ENCODE measurements at regions of chr13 and their contacts with region 1.

Region 1: DNA sequence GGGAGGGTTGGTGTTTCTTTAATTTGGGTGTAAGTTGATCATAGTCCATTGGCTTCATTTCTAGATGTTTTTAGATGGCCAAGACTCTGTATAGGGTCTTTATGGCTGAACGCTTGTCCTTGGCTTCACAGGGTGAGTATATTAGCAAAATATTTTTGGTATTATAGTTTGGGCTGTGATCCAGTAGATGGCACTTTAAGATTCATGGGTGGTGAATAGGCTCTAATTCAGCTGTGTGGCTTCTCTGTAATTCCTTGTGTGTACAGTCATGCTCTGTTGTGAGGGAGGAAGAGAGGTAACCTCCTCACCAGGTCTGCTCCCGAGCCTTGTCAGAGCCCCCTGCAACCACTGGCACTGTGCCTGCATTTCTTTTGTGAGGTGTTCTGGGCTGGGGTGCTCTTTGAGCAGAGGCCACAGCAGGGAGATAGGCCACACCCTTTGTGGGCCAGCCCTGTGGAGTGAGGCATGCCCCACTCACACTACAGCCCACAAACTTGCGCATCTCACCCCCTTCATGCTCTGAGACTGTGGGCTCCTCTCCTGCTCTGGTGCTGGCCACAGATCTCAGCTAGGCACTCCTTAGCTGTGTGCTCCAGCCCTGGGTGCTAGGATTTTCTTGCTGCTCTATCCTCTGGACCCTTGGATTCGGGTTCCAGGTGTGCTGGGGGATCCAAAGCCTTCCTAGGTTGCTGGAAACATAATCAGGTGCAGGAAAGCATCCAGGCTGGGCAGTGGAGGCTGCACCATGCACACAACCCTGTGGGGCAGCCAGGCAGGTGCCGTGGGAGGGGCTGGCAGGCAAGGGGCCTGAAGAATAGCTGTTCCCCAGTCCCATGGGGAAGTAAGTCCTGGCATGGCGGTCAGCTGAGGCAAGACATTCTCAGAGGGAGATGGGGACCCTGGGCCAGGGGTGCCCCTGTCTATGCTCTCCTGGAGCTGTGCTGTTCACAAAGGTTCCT is 193.9 kb downstream of the GPC5 start:
- DNase-seq: no peak
- H3K4me3 ChIP-seq: no peak overlapping the region
- H3K27ac ChIP-seq: no peak overlapping the region
- H3K4me1 ChIP-seq: no peaks in the 10 kb centered on the region
- H3K27me3 ChIP-seq: no peaks in the 10 kb centered on the region
- CTCF ChIP-seq: no peak
- POLR2A ChIP-seq: no peak

Region 2: DNA sequence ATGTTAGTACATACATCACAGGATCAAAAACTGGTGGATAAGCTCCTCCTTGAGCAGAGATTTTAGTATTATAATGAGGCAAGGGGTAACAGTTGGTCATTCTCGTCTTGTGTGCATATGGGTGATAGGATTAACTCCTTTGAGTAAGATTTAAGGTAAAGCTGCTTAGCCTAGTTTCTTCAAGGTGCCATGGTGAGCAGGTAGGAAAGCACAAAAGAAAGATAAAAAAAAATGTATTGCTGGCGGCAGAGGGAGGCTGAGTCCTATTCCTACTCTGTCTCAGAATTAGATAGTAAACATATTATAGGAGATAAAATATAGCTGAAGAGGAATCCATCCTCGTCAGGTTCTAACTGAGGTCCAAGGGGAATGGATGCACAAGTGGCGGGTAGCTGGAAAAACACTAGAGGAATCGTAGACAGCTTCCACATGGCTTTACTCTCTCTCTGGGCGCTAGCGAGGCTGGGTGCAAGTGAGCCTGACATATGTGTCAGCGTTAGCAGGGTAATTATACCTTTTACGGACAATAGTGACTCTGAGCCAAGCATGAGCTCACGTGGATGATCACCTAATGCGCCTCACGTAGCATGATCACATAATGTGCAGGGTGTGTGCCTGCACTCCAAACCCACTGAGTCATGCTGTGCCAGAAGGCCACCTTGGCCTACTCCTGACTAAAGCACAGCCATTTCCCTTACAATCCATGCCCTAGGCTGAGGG is 979.1 kb before region 1 on chr13:
- intact Hi-C with region 1: no loop called
- DNase-seq: no peak
- H3K4me3 ChIP-seq: no peak overlapping the region
- H3K27ac ChIP-seq: no peak overlapping the region
- H3K4me1 ChIP-seq: no peaks in the 10 kb centered on the region
- H3K27me3 ChIP-seq: no peaks in the 10 kb centered on the region
- CTCF ChIP-seq: no peak
- POLR2A ChIP-seq: no peak

Region 3: GRCh38 chr13:91785431-91786119 is 193.2 kb after region 1 on chr13:
- intact Hi-C with region 1: loop called (anchors 5 kb)
- DNase-seq: no peak
- H3K4me3 ChIP-seq: no peak overlapping the region
- H3K27ac ChIP-seq: no peak overlapping the region
- H3K4me1 ChIP-seq: no peaks in the 10 kb centered on the region
- H3K27me3 ChIP-seq: no peaks in the 10 kb centered on the region
- CTCF ChIP-seq: no peak
- POLR2A ChIP-seq: no peak

Region 4: DNA sequence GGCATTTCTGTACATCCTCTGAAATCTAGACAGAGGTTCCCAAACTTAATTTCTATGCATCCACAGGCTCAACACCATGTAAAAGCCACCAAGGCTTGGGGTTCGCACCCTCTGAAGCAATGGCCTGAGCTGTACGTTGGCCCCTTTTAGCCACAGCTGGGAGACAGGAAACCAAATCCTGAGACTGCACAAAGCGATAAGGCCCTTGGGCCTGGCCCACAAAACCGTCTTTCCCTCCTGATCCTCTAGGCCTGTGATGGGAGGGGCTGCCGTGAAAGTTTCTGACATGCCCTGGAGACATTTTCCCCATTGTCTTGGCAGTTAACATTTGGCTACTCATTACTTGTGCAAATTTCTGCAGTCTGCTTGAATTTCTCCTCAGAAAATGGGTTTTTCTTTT is 572.5 kb after region 1 on chr13:
- intact Hi-C with region 1: loop called (anchors 5 kb)
- DNase-seq: no peak
- H3K4me3 ChIP-seq: no peak overlapping the region
- H3K27ac ChIP-seq: no peak overlapping the region
- H3K4me1 ChIP-seq: no peaks in the 10 kb centered on the region
- H3K27me3 ChIP-seq: no peaks in the 10 kb centered on the region
- CTCF ChIP-seq: no peak
- POLR2A ChIP-seq: no peak